ENCODE measurements at regions of chr19 and their contacts with region 1.

Region 1: DNA sequence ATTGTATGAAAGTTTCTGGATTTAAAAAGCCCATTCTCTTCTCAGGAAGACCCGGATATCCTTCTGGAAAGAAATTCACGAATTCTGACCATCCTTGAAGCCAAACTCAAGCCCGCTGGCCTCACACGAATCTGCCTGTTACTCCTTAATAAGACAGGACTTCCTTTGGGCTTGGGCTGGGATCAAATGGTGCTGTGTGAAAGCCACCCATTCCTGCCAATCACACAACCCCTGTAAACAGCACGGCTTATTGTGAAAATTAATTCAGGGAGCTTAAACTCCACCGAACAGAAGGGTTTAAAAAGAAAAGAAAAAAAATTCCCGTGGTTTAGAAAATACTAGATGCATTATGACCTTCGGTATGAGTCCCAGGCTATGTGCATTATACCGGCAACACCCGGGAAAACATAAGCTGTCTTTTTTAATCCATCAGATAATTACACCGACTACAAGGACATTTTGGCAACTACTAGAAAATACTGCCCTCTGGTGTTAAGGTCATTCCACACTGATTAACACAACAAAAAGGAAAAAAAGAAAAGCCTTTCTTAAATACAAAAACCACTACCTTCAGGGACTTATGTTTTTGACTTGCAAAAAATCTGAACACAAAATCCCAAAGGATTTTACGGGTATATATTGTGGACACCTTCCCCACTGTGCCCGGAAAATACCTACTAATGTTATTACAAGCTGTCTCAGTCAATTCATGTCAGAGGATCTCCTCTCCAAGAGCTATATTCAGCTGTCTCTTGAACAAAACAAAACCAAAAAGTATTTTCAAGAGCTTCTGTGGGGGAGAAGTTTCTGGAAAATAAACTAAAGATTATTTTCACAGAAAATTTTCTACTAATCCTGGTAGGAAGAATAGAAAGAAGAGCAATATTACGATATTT is 76.0 kb upstream of the LSM14A start:
- DNase-seq: peak; percentile 78 to 79
- ATAC-seq: peak; percentile 78 to 91
- H3K4me3 ChIP-seq: no peak overlapping the region; the same call in 2 of the 3 replicates
- H3K27ac ChIP-seq: no peak overlapping the region
- H3K4me1 ChIP-seq: no peaks in the 10 kb centered on the region
- CTCF ChIP-seq: peak; percentile 99
- EP300 ChIP-seq: no peak
- POLR2A ChIP-seq: no peak
- RAD21 ChIP-seq: peak; percentile 97

Region 2: DNA sequence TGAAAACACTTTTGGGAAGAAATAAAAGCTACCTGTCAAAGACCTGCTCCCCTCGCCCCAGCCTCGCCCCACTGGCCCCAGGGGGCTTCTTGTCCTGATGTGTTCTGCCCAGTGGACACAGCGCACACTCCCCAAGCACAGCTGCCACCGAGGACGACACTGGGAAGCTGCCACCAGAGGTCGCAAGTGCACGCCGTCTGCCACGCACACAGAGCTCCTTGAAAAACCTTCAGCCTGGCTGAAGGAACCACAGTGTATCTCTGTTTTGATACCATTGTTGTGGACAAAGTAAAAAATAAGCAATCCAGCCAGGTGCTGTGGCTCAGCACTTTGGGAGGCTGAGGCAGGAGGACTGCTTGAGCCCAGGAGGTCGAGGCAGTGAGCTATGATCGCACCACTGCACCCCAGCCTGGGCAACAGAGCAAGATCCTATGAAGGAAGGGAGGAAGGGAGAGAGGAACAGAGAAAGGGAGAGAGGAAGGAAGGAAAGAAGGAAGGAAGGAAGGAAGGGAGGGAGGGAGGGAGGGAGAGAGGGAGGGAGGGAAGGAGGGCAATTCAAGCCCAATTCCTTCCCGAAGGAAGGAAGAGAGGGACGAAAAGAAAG is 665.5 kb before region 1 on chr19:
- CTCF ChIA-PET with region 1: interaction called, 24 read pairs
- POLR2A ChIA-PET with region 1: no interaction called
- DNase-seq: peak; percentile 80 to 93
- ATAC-seq: peak; percentile 90 to 98
- H3K4me3 ChIP-seq: no peak overlapping the region
- H3K27ac ChIP-seq: no peak overlapping the region
- H3K4me1 ChIP-seq: no peaks in the 10 kb centered on the region
- CTCF ChIP-seq: peak; percentile 98
- EP300 ChIP-seq: no peak
- POLR2A ChIP-seq: no peak
- RAD21 ChIP-seq: peak; percentile 90 to 95

Region 3: DNA sequence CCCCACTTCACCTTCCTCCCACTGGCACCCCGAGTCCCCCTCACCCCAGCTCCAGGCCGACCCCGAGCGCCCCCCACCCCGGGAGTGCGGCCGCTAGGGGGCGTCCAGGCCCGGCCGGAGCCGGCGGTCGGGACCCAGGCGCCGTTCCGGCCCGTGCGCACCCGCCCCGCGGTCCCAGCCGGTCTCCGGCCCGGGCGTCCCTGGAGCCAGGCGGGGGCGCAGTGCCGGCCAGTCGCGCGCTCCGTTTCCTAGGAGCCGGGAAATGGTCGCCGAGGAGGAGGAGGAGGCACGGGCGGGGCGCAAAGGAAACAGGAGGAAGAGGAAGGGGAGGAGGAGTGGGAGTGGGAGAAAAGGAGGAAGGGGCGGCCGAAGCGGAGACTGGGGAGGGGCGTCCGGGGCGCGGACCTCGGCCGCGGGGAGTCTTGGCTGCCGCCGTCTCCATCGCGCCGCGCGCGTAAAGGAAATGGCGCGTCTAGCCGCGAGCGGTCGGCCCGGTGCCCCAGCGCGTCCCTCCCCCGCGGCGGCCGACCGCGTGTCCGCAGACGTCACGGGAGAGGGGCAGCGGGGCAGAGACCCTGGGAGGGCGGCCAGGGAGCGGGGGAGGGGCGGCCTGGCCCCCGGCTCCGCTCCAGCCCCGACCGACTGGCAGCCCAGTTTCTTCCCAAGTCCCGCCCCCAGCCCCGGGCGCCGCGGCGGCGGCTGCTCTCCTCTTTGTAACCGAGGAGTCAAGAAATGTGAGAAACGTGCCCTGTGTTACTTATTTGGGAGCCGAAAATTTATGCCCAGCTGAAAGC is 300.7 kb before region 1 on chr19:
- CTCF ChIA-PET with region 1: interaction called, 74 read pairs
- POLR2A ChIA-PET with region 1: interaction called, 8 read pairs
- DNase-seq: peak; percentile 94 to 96
- ATAC-seq: peak; percentile 70 to 80
- H3K4me3 ChIP-seq: peak overlapping the region; percentile 88
- H3K27ac ChIP-seq: peak overlapping the region; percentile 96 to 97
- H3K4me1 ChIP-seq: peaks cover 28% of the 10 kb centered on the region
- CTCF ChIP-seq: peak; percentile 100
- EP300 ChIP-seq: peak; percentile 34 to 73; a peak in 1 of 5 replicates
- POLR2A ChIP-seq: peak; percentile 85
- RAD21 ChIP-seq: peak; percentile 42 to 87; a peak in 4 of 5 replicates

Region 4: DNA sequence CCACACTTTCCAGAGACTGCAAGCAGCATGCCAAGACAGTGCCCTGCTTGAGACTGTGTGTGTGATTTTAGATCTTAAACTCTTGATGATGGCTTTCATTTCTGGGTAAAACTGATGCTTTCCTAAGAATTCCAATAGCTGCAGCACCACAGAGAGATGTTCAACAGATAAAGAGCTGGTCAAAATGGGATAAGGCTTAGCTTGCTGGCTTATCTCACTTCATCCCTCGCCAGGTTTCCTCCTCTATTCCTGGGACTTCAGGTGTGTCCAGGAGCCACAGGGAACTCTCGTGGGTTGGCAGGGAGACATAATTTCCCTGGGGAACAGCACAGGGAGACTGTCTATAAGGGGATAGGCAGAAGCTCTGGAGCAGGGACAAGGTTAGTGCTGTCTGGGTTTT is 162.3 kb before region 1 on chr19:
- CTCF ChIA-PET with region 1: interaction called, 10 read pairs
- POLR2A ChIA-PET with region 1: no interaction called
- DNase-seq: no peak
- ATAC-seq: no peak
- H3K4me3 ChIP-seq: no peak overlapping the region
- H3K27ac ChIP-seq: no peak overlapping the region
- H3K4me1 ChIP-seq: no peaks in the 10 kb centered on the region
- CTCF ChIP-seq: no peak
- EP300 ChIP-seq: no peak
- POLR2A ChIP-seq: no peak
- RAD21 ChIP-seq: no peak

Region 5: GRCh38 chr19:34051255-34051654 is 45.0 kb before region 1 on chr19:
- CTCF ChIA-PET with region 1: interaction called, 24 read pairs
- POLR2A ChIA-PET with region 1: no interaction called
- DNase-seq: no peak
- ATAC-seq: no peak
- H3K4me3 ChIP-seq: no peak overlapping the region
- H3K27ac ChIP-seq: no peak overlapping the region
- H3K4me1 ChIP-seq: no peaks in the 10 kb centered on the region
- CTCF ChIP-seq: no peak
- EP300 ChIP-seq: no peak
- POLR2A ChIP-seq: no peak
- RAD21 ChIP-seq: no peak

Region 6: DNA sequence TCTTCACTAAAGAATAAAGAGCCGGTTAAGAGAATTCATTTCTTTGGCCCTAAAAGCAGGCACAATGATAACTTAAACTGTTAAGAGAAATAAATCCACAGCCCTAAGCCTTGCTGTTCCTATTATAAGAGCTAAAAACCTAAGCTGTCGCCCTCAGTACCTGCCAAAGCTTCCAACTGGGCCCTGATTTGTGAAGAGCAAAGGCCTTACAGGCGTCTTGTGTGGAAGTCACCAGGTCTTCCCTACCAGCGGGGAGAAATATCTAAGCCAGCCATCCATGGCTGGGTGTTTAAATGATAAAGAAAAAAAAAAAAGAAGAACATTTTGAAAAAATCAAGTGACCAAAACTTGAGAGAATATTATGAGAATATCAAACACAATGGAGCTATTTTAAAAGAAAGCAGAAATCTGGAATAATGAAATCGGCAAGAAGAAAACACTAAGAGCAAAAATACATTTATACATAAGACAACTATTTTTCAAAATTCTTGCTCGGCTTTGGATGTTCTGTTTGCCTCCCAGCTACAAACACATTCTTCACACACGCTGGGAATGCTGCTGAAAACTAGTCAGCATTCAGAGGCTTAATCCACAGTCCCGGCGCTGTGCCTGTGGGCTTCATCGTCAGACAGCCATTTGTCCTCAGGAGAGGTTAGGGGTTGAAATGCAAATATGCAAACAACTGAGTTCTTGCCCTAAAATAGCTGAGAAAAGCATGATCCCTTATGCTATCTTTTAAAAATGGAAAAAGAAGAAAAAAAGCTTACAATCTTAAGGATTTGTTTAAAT is 13.8 kb before region 1 on chr19:
- CTCF ChIA-PET with region 1: interaction called, 63 read pairs
- POLR2A ChIA-PET with region 1: no interaction called
- DNase-seq: no peak
- ATAC-seq: no peak
- H3K4me3 ChIP-seq: no peak overlapping the region
- H3K27ac ChIP-seq: no peak overlapping the region
- H3K4me1 ChIP-seq: no peaks in the 10 kb centered on the region
- CTCF ChIP-seq: no peak
- EP300 ChIP-seq: no peak
- POLR2A ChIP-seq: no peak
- RAD21 ChIP-seq: no peak

Region 7: DNA sequence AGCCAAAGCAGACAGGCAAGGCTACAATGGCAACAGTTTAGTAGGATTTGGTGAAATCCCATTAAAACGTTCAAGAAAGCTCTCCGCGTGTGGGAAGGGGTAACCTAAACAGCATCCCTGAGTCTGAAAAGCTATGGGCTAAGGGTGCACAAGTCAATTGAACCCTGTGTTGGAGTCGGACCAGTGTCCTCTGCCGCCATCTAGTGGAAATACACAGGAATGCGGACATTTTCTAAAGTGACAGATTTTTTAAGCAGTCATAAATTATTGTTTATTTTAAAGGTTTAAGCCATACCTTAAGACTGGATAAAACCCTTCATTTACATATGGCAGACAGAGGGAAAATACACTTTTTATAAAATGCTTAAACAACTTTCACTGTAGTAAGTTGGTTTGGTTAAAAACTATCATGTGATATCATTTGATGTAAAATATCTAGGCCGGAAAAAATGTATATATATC is 49.5 kb after region 1 on chr19:
- CTCF ChIA-PET with region 1: interaction called, 52 read pairs
- POLR2A ChIA-PET with region 1: no interaction called
- DNase-seq: peak; percentile 73 to 75
- ATAC-seq: peak; percentile 66 to 81; a peak in 5 of 6 replicates
- H3K4me3 ChIP-seq: no peak overlapping the region
- H3K27ac ChIP-seq: no peak overlapping the region
- H3K4me1 ChIP-seq: no peaks in the 10 kb centered on the region
- CTCF ChIP-seq: peak; percentile 99
- EP300 ChIP-seq: no peak
- POLR2A ChIP-seq: no peak
- RAD21 ChIP-seq: peak; percentile 96 to 97